ENCODE measurements at regions of chr11 and their contacts with region 1.

Region 1: GRCh38 chr11:130213143-130213978 is 53.8 kb downstream of the ST14 start:
- DNase-seq: peak; percentile 57 to 83 (median 61)
- ATAC-seq: peak; percentile 55 to 88 (median 82)
- H3K4me3 ChIP-seq: peak overlapping the region in 1 of 12 donors; percentile 7
- H3K27ac ChIP-seq: no peak overlapping the region
- H3K4me1 ChIP-seq: peaks cover 0 to 8% (median 4%) of the 10 kb centered on the region in 12 donors
- H3K27me3 ChIP-seq: peaks cover 0 to 6% (median 0%) of the 10 kb centered on the region in 9 donors
- CTCF ChIP-seq: peak; percentile 91 to 98 (median 95)
- POLR2A ChIP-seq: no peak

Region 2: DNA sequence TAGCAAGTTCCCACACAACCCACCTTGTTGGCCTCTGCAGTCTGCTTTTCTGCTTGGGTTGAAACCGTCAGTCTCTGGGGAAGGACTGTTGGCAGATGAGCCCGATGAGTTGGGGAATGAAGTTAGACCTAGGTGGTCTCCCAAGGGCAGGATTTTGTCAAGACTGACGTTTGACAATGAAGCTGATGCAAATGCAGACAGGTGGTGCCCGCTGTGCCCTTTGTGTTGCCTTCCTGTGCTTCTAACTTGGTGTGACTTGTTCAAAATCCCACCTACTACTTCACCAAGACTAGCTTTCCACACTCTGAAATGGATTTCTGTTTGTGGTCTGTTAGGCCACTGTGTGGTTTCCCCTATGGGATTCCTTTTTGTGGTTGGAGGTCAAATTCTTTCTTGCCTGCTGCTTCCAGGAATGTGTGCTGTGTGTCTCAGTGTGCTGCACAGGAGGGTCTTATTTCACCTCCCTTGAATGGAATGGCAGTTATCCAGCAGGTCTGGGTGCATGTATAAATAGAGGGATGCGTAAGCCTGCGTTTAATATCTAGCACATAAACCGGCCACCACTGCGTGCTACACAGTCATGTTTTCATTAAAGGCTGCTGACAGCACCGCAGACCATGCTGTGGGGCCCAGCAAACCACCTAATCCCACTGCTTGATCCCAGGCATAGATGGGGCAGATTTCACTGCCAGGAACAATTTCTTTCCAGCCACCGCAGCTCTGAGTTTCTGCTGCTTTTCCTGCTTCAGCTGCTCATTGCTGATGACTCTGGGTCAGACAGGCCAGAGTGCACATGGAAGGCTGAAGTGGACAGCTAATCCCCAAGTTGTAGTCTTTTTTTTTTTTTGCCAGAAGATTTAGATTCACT is 170.2 kb after region 1 on chr11:
- intact Hi-C with region 1: loop called in 3 of 10 experiments (anchors 10 kb)
- DNase-seq: no peak
- ATAC-seq: peak in 3 of 4 donors; percentile 40 to 56 (median 52)
- H3K4me3 ChIP-seq: no peak overlapping the region
- H3K27ac ChIP-seq: no peak overlapping the region
- H3K4me1 ChIP-seq: peaks cover 0 to 6% (median 0%) of the 10 kb centered on the region in 12 donors
- H3K27me3 ChIP-seq: no peaks in the 10 kb centered on the region
- CTCF ChIP-seq: no peak
- POLR2A ChIP-seq: no peak

Region 3: GRCh38 chr11:130403271-130403804 is 190.0 kb after region 1 on chr11:
- intact Hi-C with region 1: loop called in 1 of 10 experiments (anchors 5 kb)
- DNase-seq: peak; percentile 59 to 83 (median 74)
- ATAC-seq: peak; percentile 62 to 81 (median 76)
- H3K4me3 ChIP-seq: no peak overlapping the region
- H3K27ac ChIP-seq: peak overlapping the region in 11 of 12 donors; percentile 4 to 80 (median 56)
- H3K4me1 ChIP-seq: peaks cover 0 to 48% (median 21%) of the 10 kb centered on the region in 12 donors
- H3K27me3 ChIP-seq: no peaks in the 10 kb centered on the region
- CTCF ChIP-seq: no peak
- POLR2A ChIP-seq: no peak

Region 4: DNA sequence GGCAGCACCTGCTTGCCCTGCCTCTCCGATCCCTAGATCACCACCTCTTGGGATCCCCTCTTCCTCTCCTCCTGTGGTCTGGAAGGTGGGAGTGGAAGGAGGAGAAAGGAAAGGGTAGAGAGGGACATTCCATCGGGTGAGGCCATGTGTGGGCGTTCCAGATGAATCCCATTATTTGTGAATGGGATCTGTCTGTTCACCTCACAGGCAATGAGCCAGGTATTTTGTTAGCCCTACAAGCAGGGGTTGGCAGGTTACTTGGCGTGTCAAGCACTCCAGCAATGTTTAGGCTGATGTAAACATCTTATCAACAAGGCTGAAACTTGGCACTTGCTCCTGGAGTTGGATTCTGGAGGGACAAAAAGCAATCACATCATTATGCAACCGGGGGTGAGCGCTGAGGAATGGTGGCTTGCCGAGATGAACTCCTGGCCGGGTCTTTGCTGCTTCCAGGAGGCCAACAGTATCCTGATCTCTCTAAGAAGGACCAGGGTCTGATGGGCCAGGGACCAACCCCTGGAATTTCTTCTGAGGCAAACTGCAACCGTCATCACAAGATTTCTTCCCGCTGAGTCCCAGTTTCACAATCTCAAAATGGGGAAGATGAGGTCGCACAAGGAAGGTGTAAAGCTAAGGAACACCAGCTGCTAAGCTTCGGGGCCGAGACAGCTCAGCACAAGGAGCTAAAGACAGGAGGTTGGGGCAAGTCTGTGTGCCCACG is 207.3 kb after region 1 on chr11:
- intact Hi-C with region 1: loop called in 7 of 10 experiments (anchors 5 kb)
- DNase-seq: peak in 1 of 5 donors; percentile 22
- ATAC-seq: peak in 2 of 4 donors; percentile 6 to 36
- H3K4me3 ChIP-seq: no peak overlapping the region
- H3K27ac ChIP-seq: peak overlapping the region in 1 of 12 donors; percentile 48
- H3K4me1 ChIP-seq: peaks cover 0 to 13% (median 0%) of the 10 kb centered on the region in 12 donors
- H3K27me3 ChIP-seq: peaks cover 0 to 3% (median 0%) of the 10 kb centered on the region in 9 donors
- CTCF ChIP-seq: no peak
- POLR2A ChIP-seq: no peak

Region 5: GRCh38 chr11:130427581-130428315 is 214.4 kb after region 1 on chr11:
- intact Hi-C with region 1: loop called (anchors 2 to 5 kb)
- DNase-seq: peak in 2 of 5 donors; percentile 38 to 65
- ATAC-seq: peak in 2 of 4 donors; percentile 9 to 32
- H3K4me3 ChIP-seq: peak overlapping the region in 11 of 12 donors; percentile 35 to 59 (median 50)
- H3K27ac ChIP-seq: peak overlapping the region in 1 of 12 donors; percentile 49
- H3K4me1 ChIP-seq: peaks cover 0 to 32% (median 14%) of the 10 kb centered on the region in 12 donors
- H3K27me3 ChIP-seq: peaks cover 0 to 55% (median 12%) of the 10 kb centered on the region in 9 donors
- CTCF ChIP-seq: peak in 6 of 12 donors; percentile 12 to 42 (median 27)
- POLR2A ChIP-seq: no peak

Region 6: GRCh38 chr11:130861902-130862860 is 648.8 kb after region 1 on chr11:
- intact Hi-C with region 1: loop called in 4 of 10 experiments (anchors 2 to 10 kb)
- DNase-seq: peak; percentile 87 to 95 (median 90)
- ATAC-seq: peak; percentile 38 to 72 (median 58)
- H3K4me3 ChIP-seq: peak overlapping the region in 1 of 12 donors; percentile 2
- H3K27ac ChIP-seq: peak overlapping the region in 1 of 12 donors; percentile 28
- H3K4me1 ChIP-seq: peaks cover 0 to 37% (median 15%) of the 10 kb centered on the region in 12 donors
- H3K27me3 ChIP-seq: no peaks in the 10 kb centered on the region
- CTCF ChIP-seq: peak; percentile 99 to 100 (median 100)
- POLR2A ChIP-seq: no peak

Region 7: GRCh38 chr11:130894322-130895025 is 681.1 kb after region 1 on chr11:
- intact Hi-C with region 1: loop called in 3 of 10 experiments (anchors 10 kb)
- DNase-seq: peak; percentile 58 to 68 (median 67)
- ATAC-seq: peak in 3 of 4 donors; percentile 27 to 51 (median 40)
- H3K4me3 ChIP-seq: no peak overlapping the region
- H3K27ac ChIP-seq: peak overlapping the region in 5 of 12 donors; percentile 18 to 96 (median 29)
- H3K4me1 ChIP-seq: peaks cover 0 to 69% (median 26%) of the 10 kb centered on the region in 12 donors
- H3K27me3 ChIP-seq: no peaks in the 10 kb centered on the region
- CTCF ChIP-seq: peak; percentile 80 to 90 (median 88)
- POLR2A ChIP-seq: no peak

Measured in heart left ventricle (tissue), 16 donors.